ENCODE measurements at regions of chr1 and their contacts with region 1.

Region 1: GRCh38 chr1:151888972-151889570 is 20.2 kb downstream of the THEM4 start:
- DNase-seq: no peak
- H3K4me3 ChIP-seq: no peak overlapping the region
- H3K27ac ChIP-seq: no peak overlapping the region
- H3K27me3 ChIP-seq: no peaks in the 10 kb centered on the region
- CTCF ChIP-seq: peak in 55 of 56 donors; percentile 24 to 69 (median 48)

Region 2: DNA sequence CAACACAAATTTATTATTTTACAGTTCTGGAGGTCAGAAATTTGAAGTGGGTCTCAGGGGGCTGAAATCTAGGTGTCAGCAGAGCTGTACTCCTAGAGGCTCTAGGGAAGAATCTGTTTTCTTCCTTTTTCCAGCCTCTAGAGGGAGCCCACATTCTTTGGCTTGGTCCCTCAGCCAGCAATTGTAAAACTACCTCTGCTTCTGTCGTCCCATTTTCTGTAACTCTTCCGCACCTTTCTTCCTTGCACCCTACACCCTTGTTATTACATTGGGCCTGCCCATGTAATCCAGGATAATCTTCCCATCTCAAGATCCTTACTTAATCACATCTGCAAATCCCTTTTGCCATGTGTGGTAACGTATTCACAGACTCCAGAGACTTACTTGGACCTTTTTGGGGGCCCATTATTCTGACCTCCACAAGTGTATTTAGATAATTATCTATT is 45.0 kb after region 1 on chr1:
- intact Hi-C with region 1: loop called in 1 of 2 experiments (anchors 2 kb)
- DNase-seq: no peak
- H3K4me3 ChIP-seq: no peak overlapping the region
- H3K27ac ChIP-seq: no peak overlapping the region
- H3K27me3 ChIP-seq: peaks cover 0 to 25% (median 0%) of the 10 kb centered on the region in 45 donors
- CTCF ChIP-seq: peak; percentile 50 to 93 (median 78)

Region 3: GRCh38 chr1:152127670-152128069 is 238.6 kb after region 1 on chr1:
- intact Hi-C with region 1: no loop called
- DNase-seq: no peak
- H3K4me3 ChIP-seq: no peak overlapping the region
- H3K27ac ChIP-seq: no peak overlapping the region
- H3K27me3 ChIP-seq: peaks cover 0 to 48% (median 11%) of the 10 kb centered on the region in 45 donors
- CTCF ChIP-seq: no peak